ENCODE measurements at regions of chr3 and their contacts with region 1.

Region 1: DNA sequence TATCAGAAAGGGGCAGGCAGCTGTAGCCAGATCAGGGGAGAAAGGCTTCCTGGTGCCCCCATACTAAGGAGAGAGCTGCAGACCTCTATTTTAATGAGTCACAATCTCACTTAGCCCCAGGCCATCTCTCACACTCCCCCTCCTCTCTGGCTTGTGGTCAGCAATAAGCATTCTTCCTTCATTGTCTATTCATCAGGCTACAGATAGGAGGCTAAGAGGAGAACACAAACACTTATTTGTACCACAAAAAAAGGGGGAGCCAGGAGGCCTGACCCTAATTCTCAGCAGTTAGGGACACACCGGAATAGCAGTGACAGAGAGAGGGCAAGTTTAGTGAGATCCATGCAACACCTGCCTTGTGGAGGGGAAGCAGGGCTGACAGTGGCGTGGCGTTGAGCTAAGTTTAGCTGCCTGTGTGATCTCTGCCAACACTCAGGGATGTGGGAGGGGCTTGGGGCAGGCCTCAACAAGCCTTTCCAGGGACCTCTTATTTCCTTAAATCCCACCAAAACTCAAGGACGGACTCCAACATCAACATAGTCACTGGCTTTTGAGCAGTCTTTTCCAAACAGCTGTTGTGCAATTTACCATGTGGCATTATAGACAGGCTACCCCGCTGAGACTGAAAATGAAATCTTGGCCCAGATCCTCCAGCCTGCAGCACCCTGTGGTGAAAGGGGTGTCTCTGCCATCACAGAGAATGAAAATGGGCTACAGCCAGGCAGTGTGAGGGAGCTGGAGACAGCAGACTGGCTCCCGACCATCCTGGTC is 191.9 kb upstream of the TSC22D2 start:
- DNase-seq: peak; percentile 48 to 63
- H3K4me3 ChIP-seq: no peak overlapping the region
- H3K27ac ChIP-seq: no peak overlapping the region
- H3K4me1 ChIP-seq: peaks cover 10% of the 10 kb centered on the region
- H3K27me3 ChIP-seq: no peaks in the 10 kb centered on the region
- CTCF ChIP-seq: no peak; the same call in 1 of the 2 replicates

Region 2: GRCh38 chr3:149547938-149548668 is 668.1 kb before region 1 on chr3:
- CTCF ChIA-PET with region 1: no interaction called
- POLR2A ChIA-PET with region 1: interaction called, 10 read pairs
- intact Hi-C with region 1: no loop called
- DNase-seq: peak; percentile 49 to 74
- H3K4me3 ChIP-seq: no peak overlapping the region
- H3K27ac ChIP-seq: peak overlapping the region; percentile 41; the same call in 1 of the 2 replicates
- H3K4me1 ChIP-seq: no peaks in the 10 kb centered on the region
- H3K27me3 ChIP-seq: no peaks in the 10 kb centered on the region
- CTCF ChIP-seq: no peak

Region 3: DNA sequence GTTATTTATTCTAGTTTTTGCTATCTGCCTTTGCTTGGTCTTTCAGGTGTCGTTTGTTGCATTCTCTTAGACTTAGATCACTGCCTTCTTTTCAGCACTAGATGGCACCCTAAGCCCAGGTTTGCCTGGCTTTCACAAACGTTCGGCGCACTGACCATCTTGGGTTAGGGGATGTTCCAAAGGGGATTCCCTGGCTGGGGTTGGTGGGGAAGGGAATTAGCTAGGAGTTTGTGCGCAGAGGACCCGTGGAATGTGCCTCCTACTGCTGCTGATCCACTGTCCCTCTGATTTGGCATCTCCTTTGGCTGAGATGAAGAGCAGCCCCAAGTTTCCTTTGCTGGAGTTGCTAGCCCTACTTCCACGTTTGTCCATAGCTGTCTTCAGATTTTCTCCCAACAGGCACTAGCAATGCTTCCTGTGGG is 279.4 kb before region 1 on chr3:
- CTCF ChIA-PET with region 1: interaction called, 3 read pairs
- POLR2A ChIA-PET with region 1: no interaction called
- intact Hi-C with region 1: loop called (anchors 2 kb)
- DNase-seq: peak in 1 of 2 experiments; percentile 44
- H3K4me3 ChIP-seq: no peak overlapping the region
- H3K27ac ChIP-seq: no peak overlapping the region
- H3K4me1 ChIP-seq: no peaks in the 10 kb centered on the region
- H3K27me3 ChIP-seq: no peaks in the 10 kb centered on the region
- CTCF ChIP-seq: peak; percentile 76

Region 4: GRCh38 chr3:150183678-150184425 is 32.4 kb before region 1 on chr3:
- CTCF ChIA-PET with region 1: interaction called, 16 read pairs
- POLR2A ChIA-PET with region 1: no interaction called
- intact Hi-C with region 1: loop called (anchors 2 kb)
- DNase-seq: peak; percentile 58
- H3K4me3 ChIP-seq: peak overlapping the region; percentile 54
- H3K27ac ChIP-seq: 0 out of 2 replicates have a peak overlapping the region, but pooled peaks have one; percentile 17
- H3K4me1 ChIP-seq: peaks cover 18% of the 10 kb centered on the region
- H3K27me3 ChIP-seq: no peaks in the 10 kb centered on the region
- CTCF ChIP-seq: peak; percentile 64; the same call in 1 of the 2 replicates

Region 5: GRCh38 chr3:150232992-150233451 is 16.8 kb after region 1 on chr3:
- CTCF ChIA-PET with region 1: no interaction called
- POLR2A ChIA-PET with region 1: no interaction called
- intact Hi-C with region 1: no loop called
- DNase-seq: peak in 1 of 2 experiments; percentile 37
- H3K4me3 ChIP-seq: no peak overlapping the region
- H3K27ac ChIP-seq: no peak overlapping the region
- H3K4me1 ChIP-seq: peaks cover 23% of the 10 kb centered on the region
- H3K27me3 ChIP-seq: no peaks in the 10 kb centered on the region
- CTCF ChIP-seq: no peak

Region 6: GRCh38 chr3:150371741-150372254 is 155.6 kb after region 1 on chr3:
- CTCF ChIA-PET with region 1: no interaction called
- POLR2A ChIA-PET with region 1: no interaction called
- intact Hi-C with region 1: no loop called
- DNase-seq: peak; percentile 77 to 99
- H3K4me3 ChIP-seq: peak overlapping the region; percentile 53; the same call in 1 of the 2 replicates
- H3K27ac ChIP-seq: peak overlapping the region; percentile 92
- H3K4me1 ChIP-seq: peaks cover 63% of the 10 kb centered on the region
- H3K27me3 ChIP-seq: no peaks in the 10 kb centered on the region
- CTCF ChIP-seq: no peak